Aorta (tissue), 5 donors: ENCODE measurements at regions of chr7 and their contacts with region 1.

Region 1: GRCh38 chr7:40057292-40057691 is 77.1 kb downstream of the MPLKIP start:
- DNase-seq: no peak
- ATAC-seq: no peak
- H3K4me3 ChIP-seq: no peak overlapping the region
- H3K27ac ChIP-seq: no peak overlapping the region
- H3K4me1 ChIP-seq: peaks cover 0 to 2% of the 10 kb centered on the region in 2 donors
- H3K27me3 ChIP-seq: no peaks in the 10 kb centered on the region

Region 2: GRCh38 chr7:39271402-39271801 is 785.9 kb before region 1 on chr7:
- intact Hi-C with region 1: no loop called
- DNase-seq: peak; percentile 78 to 89
- ATAC-seq: peak; percentile 65
- H3K4me3 ChIP-seq: no peak overlapping the region
- H3K27ac ChIP-seq: no peak overlapping the region
- H3K4me1 ChIP-seq: peaks cover 0 to 5% of the 10 kb centered on the region in 2 donors
- H3K27me3 ChIP-seq: no peaks in the 10 kb centered on the region

Region 3: DNA sequence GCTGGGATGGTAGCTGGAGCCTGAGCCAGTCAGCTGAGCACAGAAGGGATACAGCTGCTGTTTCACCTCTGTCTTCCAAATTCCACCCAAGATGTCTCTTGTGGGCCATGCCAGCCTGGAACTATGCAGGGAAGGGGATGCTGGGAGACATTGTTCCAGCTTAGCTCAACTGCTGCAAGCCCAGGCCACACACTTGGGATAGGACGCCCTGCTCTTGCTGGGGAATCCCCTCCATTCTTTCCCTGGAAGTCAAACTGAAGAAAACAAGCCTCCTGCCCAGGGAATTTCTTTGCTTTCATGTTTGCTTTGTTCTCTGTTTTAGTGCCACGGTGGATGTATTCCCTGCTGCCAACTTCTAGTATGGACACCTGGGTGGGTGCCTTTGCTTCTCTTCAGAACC is 162.4 kb before region 1 on chr7:
- intact Hi-C with region 1: loop called (anchors 2 kb)
- DNase-seq: no peak
- ATAC-seq: no peak
- H3K4me3 ChIP-seq: no peak overlapping the region
- H3K27ac ChIP-seq: no peak overlapping the region
- H3K4me1 ChIP-seq: no peaks in the 10 kb centered on the region
- H3K27me3 ChIP-seq: no peaks in the 10 kb centered on the region

Region 4: GRCh38 chr7:39949980-39950472 is 107.3 kb before region 1 on chr7 and contains the start of gene CDK13:
- intact Hi-C with region 1: loop called (anchors 5 kb)
- DNase-seq: peak; percentile 90 to 91
- ATAC-seq: peak; percentile 83
- H3K4me3 ChIP-seq: peak within 1 kb of the TSS; percentile 73 to 87
- H3K27ac ChIP-seq: peak within 1 kb of the TSS; percentile 86 to 94
- H3K4me1 ChIP-seq: no peaks in the 10 kb centered on the region
- H3K27me3 ChIP-seq: no peaks in the 10 kb centered on the region
- total RNA-seq, gene CDK13: 52.7 to 83.8 TPM